H1 (cell line): ENCODE measurements at regions of chr1 and their contacts with region 1.

Region 1: DNA sequence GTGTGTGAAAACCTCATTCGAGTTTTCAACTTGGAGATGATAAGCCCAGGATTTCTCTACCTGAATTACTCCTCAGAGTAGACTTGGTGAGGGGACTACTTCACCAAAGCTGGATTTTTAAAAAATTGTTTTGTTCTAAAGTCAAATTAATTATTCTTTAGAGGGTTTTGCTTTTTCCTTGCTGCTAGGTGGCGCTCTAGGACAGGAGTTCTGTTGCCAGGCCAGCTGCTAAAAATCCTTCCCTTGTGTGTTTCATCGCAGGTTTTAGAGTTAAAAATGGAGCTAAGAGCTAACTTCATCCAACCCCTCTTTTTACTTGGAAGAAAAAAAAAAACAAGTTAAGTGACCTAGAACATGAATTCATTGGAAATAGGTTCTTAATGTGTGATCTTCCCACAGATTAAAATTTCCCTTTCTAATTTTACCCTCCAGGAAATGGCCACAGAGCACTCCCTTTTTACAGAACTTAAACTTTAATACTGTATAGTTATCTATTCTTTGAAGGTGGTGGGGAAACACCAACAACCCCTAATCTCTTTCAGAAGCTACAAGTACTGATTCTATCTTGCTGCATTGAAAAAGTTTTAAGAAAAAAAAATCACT is 36.7 kb upstream of the FAM163A start:
- DNase-seq: peak in 1 of 2 experiments; percentile 63
- H3K4me3 ChIP-seq: no peak overlapping the region
- H3K27ac ChIP-seq: no peak overlapping the region
- H3K4me1 ChIP-seq: no peaks in the 10 kb centered on the region
- H3K27me3 ChIP-seq: no peaks in the 10 kb centered on the region
- CTCF ChIP-seq: peak in 2 of 3 experiments; percentile 68 to 85; a peak in 3 of 4 replicates
- EP300 ChIP-seq: no peak
- POLR2A ChIP-seq: no peak
- RAD21 ChIP-seq: peak; percentile 95 to 96

Region 2: DNA sequence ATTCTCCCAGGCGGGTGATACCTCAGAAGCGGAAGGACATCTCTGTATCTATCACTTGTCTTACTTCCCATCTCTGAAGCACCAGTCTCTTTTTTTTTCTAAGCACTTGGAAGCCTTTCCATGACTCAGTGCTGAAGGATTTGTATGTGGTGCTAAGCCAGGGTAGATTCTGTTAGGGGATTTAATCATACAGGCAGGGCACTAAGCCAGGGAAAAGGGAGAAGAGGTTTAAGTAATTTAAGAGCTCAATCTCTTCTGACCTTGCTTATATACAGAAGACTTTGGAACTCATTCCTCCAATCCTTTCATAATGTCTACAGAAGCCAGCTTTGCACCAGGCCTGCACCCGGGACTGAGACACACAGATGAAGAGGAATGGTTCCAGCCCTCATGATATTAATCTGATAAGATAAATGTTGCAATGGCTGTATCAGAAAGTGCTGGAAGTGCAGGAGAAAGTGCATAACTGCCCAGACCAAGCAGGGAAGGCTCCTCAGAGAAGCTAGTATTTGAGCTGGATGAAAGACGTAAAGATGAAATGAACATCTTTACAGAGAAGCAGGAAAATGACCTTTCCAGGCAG is 47.7 kb after region 1 on chr1:
- CTCF ChIA-PET with region 1: no interaction called
- POLR2A ChIA-PET with region 1: no interaction called
- DNase-seq: no peak
- H3K4me3 ChIP-seq: no peak overlapping the region
- H3K27ac ChIP-seq: no peak overlapping the region
- H3K4me1 ChIP-seq: no peaks in the 10 kb centered on the region
- H3K27me3 ChIP-seq: no peaks in the 10 kb centered on the region
- CTCF ChIP-seq: no peak
- EP300 ChIP-seq: no peak
- POLR2A ChIP-seq: no peak
- RAD21 ChIP-seq: no peak

Region 3: GRCh38 chr1:179803104-179803503 is 96.7 kb after region 1 on chr1:
- CTCF ChIA-PET with region 1: interaction called, 595 read pairs
- POLR2A ChIA-PET with region 1: interaction called, 3 read pairs
- DNase-seq: no peak
- H3K4me3 ChIP-seq: no peak overlapping the region
- H3K27ac ChIP-seq: no peak overlapping the region
- H3K4me1 ChIP-seq: no peaks in the 10 kb centered on the region
- H3K27me3 ChIP-seq: no peaks in the 10 kb centered on the region
- CTCF ChIP-seq: no peak
- EP300 ChIP-seq: no peak
- POLR2A ChIP-seq: no peak
- RAD21 ChIP-seq: no peak

Region 4: DNA sequence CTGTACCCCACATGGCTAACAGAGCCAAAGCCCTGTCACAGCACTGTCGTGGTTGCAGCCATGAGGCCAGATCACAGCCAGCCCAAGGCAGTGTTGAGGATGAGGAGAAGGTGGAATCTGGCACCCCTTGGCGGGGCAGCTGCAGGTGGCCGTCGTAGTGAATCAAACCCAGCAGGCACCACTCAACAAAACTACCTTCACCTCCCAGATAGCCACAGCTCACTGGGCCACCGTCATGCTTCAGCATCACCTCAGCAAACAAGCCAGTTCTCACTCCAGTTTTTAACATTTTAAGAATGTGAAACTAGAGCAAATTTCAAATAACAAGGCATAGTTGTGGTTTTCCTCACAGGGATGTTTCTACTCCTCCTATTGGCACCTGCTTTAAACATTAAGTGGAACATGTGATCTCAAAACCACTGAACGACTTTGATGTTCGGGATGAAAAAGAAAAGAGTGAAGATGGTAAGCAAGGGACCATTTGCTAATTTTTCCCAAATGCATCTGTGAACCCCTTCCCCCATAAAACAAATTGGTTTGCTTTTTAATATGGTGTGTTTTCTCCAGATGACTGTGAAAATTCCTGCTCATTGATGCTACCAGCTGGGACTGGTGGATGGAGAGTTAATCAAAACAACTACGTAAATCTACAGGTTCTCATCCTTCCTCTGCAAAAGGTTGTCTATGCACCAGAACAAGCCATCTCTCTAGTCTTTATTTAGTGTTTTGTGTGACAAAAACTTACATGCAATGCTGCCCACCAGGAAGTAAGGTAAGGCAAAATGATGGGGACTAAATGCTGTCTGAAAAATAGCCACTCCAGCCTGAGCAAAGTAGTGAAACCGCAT is 125.6 kb after region 1 on chr1:
- CTCF ChIA-PET with region 1: interaction called, 11 read pairs
- POLR2A ChIA-PET with region 1: no interaction called
- DNase-seq: peak in 1 of 2 experiments; percentile 39
- H3K4me3 ChIP-seq: no peak overlapping the region
- H3K27ac ChIP-seq: no peak overlapping the region
- H3K4me1 ChIP-seq: peaks cover 0 to 7% (median 3%) of the 10 kb centered on the region in 4 experiments; a peak in 3 of 7 replicates
- H3K27me3 ChIP-seq: no peaks in the 10 kb centered on the region
- CTCF ChIP-seq: no peak
- EP300 ChIP-seq: no peak
- POLR2A ChIP-seq: no peak
- RAD21 ChIP-seq: no peak